Naive thymus-derived CD4-positive, alpha-beta T cell (primary cell): ENCODE measurements at regions of chr2 and their contacts with region 1.

Region 1: DNA sequence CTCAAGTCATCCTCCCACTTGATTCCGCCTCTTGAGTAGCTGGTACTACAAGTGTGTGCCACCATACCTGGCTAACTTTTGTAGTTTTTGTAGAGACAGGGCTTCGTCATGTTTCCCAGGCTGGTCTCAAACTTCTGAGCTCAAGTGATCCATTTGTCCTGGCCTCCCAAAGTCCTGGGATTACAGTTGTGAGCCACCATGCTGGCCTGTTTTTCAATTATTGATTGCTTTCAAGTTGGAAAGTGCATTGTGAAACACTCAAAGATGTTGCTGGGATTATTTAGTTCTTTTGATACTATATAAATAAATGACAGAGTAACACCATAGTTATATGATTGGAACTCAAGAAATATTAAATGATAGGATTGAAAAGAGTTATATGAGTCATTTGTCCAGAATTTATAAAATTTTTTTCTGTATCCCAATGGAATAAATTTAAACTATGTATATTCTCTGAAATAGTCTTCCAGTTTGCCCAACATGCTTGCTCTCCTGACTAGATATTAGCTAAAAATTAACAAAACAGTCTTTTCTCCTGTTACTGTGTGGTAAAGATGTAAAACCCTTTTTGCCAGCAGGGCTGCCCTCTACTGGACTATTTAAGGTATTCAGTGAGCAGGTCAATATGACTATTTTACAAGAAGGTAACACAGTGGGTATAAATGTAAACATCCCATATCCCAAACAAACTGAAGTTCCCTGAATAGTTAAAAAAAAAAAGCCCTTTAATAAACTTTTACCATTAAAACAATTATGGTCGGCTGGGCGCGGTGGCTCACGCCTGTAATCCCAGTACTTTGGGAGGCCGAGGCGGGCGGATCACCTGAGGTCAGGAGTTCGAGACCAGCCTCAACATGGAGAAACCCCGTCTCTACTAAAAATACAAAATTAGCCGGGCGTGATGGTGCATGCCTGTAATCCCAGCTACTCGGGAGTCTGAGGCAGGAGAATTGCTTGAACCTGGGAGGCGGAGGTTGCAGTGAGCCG is 42.7 kb downstream of the ACSL3 start:
- DNase-seq: peak in 7 of 9 donors; percentile 23 to 55 (median 37)
- ATAC-seq: peak; percentile 85
- H3K4me3 ChIP-seq: no peak overlapping the region
- H3K4me3 Mint-ChIP-seq: no peak overlapping the region
- H3K27ac ChIP-seq: no peak overlapping the region
- H3K27ac Mint-ChIP-seq: peak overlapping the region in 1 of 9 donors; percentile 21
- H3K4me1 ChIP-seq: no peaks in the 10 kb centered on the region
- H3K4me1 Mint-ChIP-seq: peaks cover 18 to 52% (median 37%) of the 10 kb centered on the region in 7 donors
- H3K27me3 ChIP-seq: no peaks in the 10 kb centered on the region
- H3K27me3 Mint-ChIP-seq: no peaks in the 10 kb centered on the region

Region 2: GRCh38 chr2:221189431-221190067 is 1714.0 kb before region 1 on chr2:
- CTCF ChIA-PET with region 1: no interaction called
- POLR2A ChIA-PET with region 1: no interaction called
- intact Hi-C with region 1: no loop called
- DNase-seq: no peak
- ATAC-seq: no peak
- H3K4me3 ChIP-seq: no peak overlapping the region
- H3K4me3 Mint-ChIP-seq: no peak overlapping the region
- H3K27ac ChIP-seq: no peak overlapping the region
- H3K27ac Mint-ChIP-seq: no peak overlapping the region
- H3K4me1 ChIP-seq: no peaks in the 10 kb centered on the region
- H3K4me1 Mint-ChIP-seq: no peaks in the 10 kb centered on the region
- H3K27me3 ChIP-seq: no peaks in the 10 kb centered on the region
- H3K27me3 Mint-ChIP-seq: peaks cover 0 to 17% (median 6%) of the 10 kb centered on the region in 5 donors

Region 3: GRCh38 chr2:222690564-222691200 is 212.8 kb before region 1 on chr2:
- CTCF ChIA-PET with region 1: interaction called, 7 read pairs
- POLR2A ChIA-PET with region 1: no interaction called
- intact Hi-C with region 1: loop called in 1 of 2 experiments (anchors 1 kb)
- DNase-seq: peak; percentile 48 to 77 (median 68)
- ATAC-seq: peak; percentile 100
- H3K4me3 ChIP-seq: no peak overlapping the region
- H3K4me3 Mint-ChIP-seq: peak overlapping the region in 2 of 10 donors; percentile 30 to 40
- H3K27ac ChIP-seq: no peak overlapping the region
- H3K27ac Mint-ChIP-seq: peak overlapping the region in 1 of 9 donors; percentile 51
- H3K4me1 ChIP-seq: no peaks in the 10 kb centered on the region
- H3K4me1 Mint-ChIP-seq: peaks cover 0 to 16% (median 7%) of the 10 kb centered on the region in 7 donors
- H3K27me3 ChIP-seq: no peaks in the 10 kb centered on the region
- H3K27me3 Mint-ChIP-seq: peaks cover 0 to 22% (median 3%) of the 10 kb centered on the region in 5 donors

Region 4: DNA sequence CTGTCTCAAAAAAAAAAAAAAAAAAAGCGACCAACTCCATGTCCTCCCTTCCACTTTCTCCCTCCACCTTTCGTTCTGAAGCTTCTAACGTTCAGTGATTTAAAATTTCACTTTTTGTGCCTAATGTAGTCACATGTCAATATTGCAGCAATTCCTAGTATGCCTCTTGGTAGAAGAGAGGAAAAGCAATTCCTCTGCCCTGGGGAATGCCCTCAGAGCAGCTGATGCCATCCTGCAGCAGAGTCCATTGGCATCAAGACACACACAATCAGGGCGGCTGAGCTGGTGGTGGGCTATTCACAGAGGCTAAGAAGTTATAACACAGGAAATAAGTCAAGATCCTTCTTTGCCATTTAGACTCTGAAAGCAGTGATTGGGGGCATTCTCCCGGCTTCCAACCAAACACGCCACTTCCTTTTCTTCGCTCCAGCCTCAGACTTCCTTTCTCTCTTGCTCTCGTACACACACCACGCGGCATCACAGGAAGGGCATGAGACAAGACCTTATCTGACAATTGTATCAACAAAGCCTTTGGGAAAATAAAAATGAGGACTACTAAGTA is 160.2 kb before region 1 on chr2:
- CTCF ChIA-PET with region 1: no interaction called
- POLR2A ChIA-PET with region 1: no interaction called
- intact Hi-C with region 1: no loop called
- DNase-seq: no peak
- ATAC-seq: no peak
- H3K4me3 ChIP-seq: no peak overlapping the region
- H3K4me3 Mint-ChIP-seq: no peak overlapping the region
- H3K27ac ChIP-seq: no peak overlapping the region
- H3K27ac Mint-ChIP-seq: peak overlapping the region in 1 of 9 donors; percentile 16
- H3K4me1 ChIP-seq: no peaks in the 10 kb centered on the region
- H3K4me1 Mint-ChIP-seq: peaks cover 0 to 22% (median 7%) of the 10 kb centered on the region in 7 donors
- H3K27me3 ChIP-seq: no peaks in the 10 kb centered on the region
- H3K27me3 Mint-ChIP-seq: peaks cover 5 to 24% (median 19%) of the 10 kb centered on the region in 5 donors

Region 5: DNA sequence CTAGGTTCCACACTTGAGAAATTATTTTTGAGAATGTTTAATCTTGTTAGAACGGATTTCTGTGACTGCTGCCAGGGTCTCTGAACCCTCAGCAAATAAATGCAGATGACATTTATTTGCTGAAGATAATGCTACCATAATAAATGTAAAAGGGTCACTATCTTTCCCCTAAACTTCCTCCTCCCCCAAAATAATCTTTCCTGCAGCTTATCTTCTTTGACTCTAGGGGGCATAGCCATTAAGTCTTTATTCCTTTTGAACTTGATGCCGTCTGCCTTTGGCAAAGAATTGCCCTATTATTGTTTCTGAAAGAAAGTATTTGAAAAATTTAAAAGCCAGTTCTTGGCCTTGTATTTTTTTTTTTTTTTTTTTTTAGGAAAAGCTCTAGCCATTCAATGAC is 106.3 kb before region 1 on chr2:
- CTCF ChIA-PET with region 1: no interaction called
- POLR2A ChIA-PET with region 1: no interaction called
- intact Hi-C with region 1: loop called (anchors 1 kb)
- DNase-seq: peak in 2 of 9 donors; percentile 4 to 14
- ATAC-seq: no peak
- H3K4me3 ChIP-seq: no peak overlapping the region
- H3K4me3 Mint-ChIP-seq: no peak overlapping the region
- H3K27ac ChIP-seq: no peak overlapping the region
- H3K27ac Mint-ChIP-seq: no peak overlapping the region
- H3K4me1 ChIP-seq: no peaks in the 10 kb centered on the region
- H3K4me1 Mint-ChIP-seq: no peaks in the 10 kb centered on the region
- H3K27me3 ChIP-seq: no peaks in the 10 kb centered on the region
- H3K27me3 Mint-ChIP-seq: peaks cover 0 to 2% (median 0%) of the 10 kb centered on the region in 5 donors